Heart left ventricle (tissue), 16 donors: ENCODE measurements at regions of chr1 and their contacts with region 1.

Region 1: DNA sequence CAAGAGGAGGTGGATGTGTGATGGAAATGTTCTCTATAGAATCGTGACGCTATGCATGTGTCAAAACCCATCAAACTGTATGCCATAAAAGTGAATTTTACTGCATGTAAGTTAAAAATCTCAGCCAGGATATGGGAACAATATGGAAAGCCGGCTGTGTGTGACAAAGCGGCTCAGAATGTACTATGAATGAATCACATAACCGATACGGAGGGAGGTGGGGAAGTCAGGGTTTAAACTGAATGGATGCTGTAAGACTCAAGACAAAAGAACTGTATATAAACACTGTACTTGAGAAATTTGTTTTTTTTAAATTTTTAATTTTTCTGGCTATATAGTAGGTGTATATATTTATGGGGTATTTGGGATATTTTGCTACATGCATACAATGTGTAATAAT is 111.6 kb upstream of the PDE4B start:
- DNase-seq: no peak
- ATAC-seq: no peak
- H3K4me3 ChIP-seq: no peak overlapping the region
- H3K27ac ChIP-seq: no peak overlapping the region
- H3K4me1 ChIP-seq: no peaks in the 10 kb centered on the region
- H3K27me3 ChIP-seq: peaks cover 0 to 5% (median 0%) of the 10 kb centered on the region in 9 donors
- CTCF ChIP-seq: no peak
- POLR2A ChIP-seq: no peak

Region 2: DNA sequence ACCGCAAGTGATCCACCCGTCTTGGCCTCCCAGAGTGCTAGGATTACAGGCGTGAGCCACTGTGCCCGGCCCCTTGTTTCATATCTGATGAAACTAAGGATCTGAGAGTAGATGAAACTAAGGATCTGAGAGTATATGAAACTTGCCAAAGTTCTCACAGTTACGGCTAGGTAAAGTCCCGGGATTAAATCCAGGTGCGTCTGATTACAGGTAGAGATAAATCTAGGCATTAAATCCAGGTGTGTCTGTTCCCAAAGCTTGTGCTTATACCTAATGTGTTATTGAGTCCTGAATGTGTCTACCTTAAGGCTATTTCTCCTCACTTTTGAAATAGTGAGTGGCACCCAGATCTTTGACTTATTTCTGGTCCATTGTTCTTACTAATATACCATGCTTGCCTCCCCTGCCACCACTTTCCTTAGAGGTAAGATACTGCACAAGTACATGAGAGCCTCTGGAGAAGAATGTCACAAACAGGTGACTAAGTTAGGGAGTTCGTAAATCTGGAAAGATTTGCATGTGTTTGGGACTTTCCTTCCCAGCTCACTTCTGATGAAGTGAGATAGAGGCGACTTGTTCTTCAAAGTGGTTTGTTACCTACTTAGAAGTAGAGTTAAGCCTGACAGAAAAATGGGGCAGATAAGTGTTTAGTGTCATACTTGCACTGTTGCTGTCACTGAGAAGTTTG is 466.6 kb before region 1 on chr1:
- intact Hi-C with region 1: loop called in 2 of 10 experiments (anchors 5 kb)
- DNase-seq: no peak
- ATAC-seq: no peak
- H3K4me3 ChIP-seq: no peak overlapping the region
- H3K27ac ChIP-seq: no peak overlapping the region
- H3K4me1 ChIP-seq: peaks cover 0 to 10% (median 2%) of the 10 kb centered on the region in 12 donors
- H3K27me3 ChIP-seq: no peaks in the 10 kb centered on the region
- CTCF ChIP-seq: no peak
- POLR2A ChIP-seq: no peak

Region 3: DNA sequence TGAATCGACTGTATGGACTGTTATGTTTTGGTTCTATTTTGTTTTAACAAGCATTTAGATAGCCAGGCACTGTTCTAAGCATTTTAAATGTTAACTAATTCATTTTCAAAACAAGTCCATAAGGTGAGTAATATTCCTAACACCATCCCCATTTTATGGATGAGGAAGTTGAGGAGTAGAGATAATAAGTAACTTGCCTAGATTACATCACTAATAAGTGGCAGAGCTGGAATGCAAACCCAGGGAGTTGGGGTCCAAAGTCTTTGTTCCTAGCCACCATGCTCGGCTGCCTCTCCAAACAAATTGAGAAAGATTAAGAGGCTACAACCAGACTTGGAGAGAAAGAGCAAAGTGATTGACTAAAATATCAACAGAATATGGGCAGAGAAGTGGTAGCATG is 273.2 kb before region 1 on chr1:
- intact Hi-C with region 1: no loop called
- DNase-seq: no peak
- ATAC-seq: no peak
- H3K4me3 ChIP-seq: no peak overlapping the region
- H3K27ac ChIP-seq: no peak overlapping the region
- H3K4me1 ChIP-seq: no peaks in the 10 kb centered on the region
- H3K27me3 ChIP-seq: no peaks in the 10 kb centered on the region
- CTCF ChIP-seq: no peak
- POLR2A ChIP-seq: no peak

Region 4: DNA sequence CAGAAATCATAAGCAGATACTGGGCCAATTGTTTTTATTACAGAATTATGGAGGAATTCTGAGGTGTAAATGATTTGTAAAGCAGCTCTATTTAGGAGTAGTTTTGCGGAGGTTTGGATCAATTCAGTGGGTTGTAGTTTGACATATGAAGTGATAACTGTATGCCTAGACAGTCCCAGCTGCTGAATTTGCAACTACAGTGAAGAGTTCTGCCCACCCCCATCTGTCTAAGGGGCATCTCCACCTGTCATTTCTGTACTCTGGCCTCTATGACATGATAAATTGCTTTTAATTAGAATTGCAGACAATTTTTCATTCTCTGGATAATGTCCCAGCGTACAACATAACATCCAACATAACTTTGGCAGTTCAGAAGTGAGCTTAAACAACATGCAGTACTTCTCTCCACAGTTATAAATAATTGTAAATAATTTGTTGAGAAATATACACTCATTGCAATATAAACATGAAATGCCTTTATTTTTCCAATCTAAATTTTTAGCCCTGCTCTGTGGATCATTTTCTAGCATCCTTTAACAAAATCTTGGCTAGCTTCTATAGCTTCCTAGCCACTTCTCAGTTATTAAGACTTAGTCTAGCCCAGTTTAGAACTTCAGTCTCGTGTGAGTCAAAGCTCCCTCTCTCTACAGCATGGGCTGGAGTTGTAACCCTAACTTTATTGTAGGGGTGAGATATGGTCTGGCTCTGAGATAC is 163.9 kb after region 1 on chr1:
- intact Hi-C with region 1: no loop called
- DNase-seq: no peak
- ATAC-seq: no peak
- H3K4me3 ChIP-seq: no peak overlapping the region
- H3K27ac ChIP-seq: no peak overlapping the region
- H3K4me1 ChIP-seq: peaks cover 0 to 4% (median 0%) of the 10 kb centered on the region in 12 donors
- H3K27me3 ChIP-seq: no peaks in the 10 kb centered on the region
- CTCF ChIP-seq: no peak
- POLR2A ChIP-seq: no peak

Region 5: GRCh38 chr1:66090859-66091457 is 409.9 kb after region 1 on chr1:
- intact Hi-C with region 1: no loop called
- DNase-seq: no peak
- ATAC-seq: no peak
- H3K4me3 ChIP-seq: no peak overlapping the region
- H3K27ac ChIP-seq: no peak overlapping the region
- H3K4me1 ChIP-seq: no peaks in the 10 kb centered on the region
- H3K27me3 ChIP-seq: peaks cover 0 to 4% (median 0%) of the 10 kb centered on the region in 9 donors
- CTCF ChIP-seq: no peak
- POLR2A ChIP-seq: no peak